ENCODE measurements at regions of chr1 and their contacts with region 1.

Region 1: GRCh38 chr1:172719694-172720138 is 60.8 kb downstream of the FASLG start:
- DNase-seq: peak; percentile 75

Region 2: DNA sequence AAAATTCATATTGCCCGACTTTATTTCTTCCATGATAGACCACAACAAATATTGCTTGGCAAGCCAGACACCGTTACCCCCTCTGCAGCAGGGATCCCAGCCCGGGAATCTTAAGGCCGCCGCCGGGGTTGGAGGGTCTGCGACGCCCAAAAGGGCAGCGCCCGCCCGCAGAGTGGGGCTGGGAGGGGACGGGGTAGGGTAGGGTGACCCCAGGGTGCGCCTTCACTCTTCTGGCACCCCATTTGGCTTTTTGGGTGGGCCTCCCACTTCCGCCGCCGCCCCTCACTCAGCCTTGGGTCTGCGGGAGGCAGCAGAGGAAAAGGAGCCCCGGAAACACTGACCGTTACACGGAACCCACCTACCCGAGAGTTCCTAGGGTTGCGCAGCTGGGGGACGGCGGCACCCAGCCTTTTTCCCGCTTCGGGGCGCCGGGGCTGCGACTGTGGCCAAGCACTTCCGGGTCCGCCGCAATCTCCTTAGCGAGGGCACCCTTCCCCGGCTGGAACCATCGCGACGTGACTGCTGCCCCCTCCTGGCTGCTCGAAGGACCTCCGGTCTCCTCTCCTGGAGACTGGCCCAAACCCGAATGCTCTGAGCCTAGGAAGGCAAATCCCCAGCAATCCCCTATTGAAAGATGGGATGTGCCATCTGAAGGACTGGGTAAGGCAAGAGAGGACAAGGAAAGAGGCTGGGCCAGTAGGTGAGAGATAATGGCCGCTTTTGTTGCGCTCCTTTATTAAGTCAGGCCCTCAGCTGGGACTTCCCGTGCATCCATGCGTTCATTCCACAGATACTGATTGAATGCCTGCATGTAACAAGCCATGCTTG is 275.9 kb before region 1 on chr1 and contains the start of gene PIGC:
- in situ Hi-C with region 1: loop called (anchors 25 kb)
- DNase-seq: peak; percentile 90
- total RNA-seq, gene PIGC: 22.5 and 25.3 TPM in 2 replicates

Measured in SK-MEL-5 (cell line).